H1 (cell line): ENCODE measurements at regions of chr6 and their contacts with region 1.

Region 1: GRCh38 chr6:52995913-52996645 is 995 bp upstream of the GSTA4 start:
- DNase-seq: peak; percentile 47 to 60
- H3K4me3 ChIP-seq: peak overlapping the region in 2 of 4 experiments; percentile 6 to 40; a peak in 3 of 8 replicates
- H3K27ac ChIP-seq: no peak overlapping the region
- H3K4me1 ChIP-seq: no peaks in the 10 kb centered on the region; a peak in 1 of 7 replicates
- H3K27me3 ChIP-seq: no peaks in the 10 kb centered on the region
- CTCF ChIP-seq: no peak
- EP300 ChIP-seq: no peak
- POLR2A ChIP-seq: no peak
- RAD21 ChIP-seq: no peak

Region 2: GRCh38 chr6:52834481-52834880 is 161.6 kb before region 1 on chr6:
- CTCF ChIA-PET with region 1: no interaction called
- POLR2A ChIA-PET with region 1: no interaction called
- DNase-seq: no peak
- H3K4me3 ChIP-seq: no peak overlapping the region
- H3K27ac ChIP-seq: no peak overlapping the region
- H3K4me1 ChIP-seq: no peaks in the 10 kb centered on the region
- H3K27me3 ChIP-seq: peaks cover 0 to 3% (median 1%) of the 10 kb centered on the region in 4 experiments; a peak in 1 of 7 replicates
- CTCF ChIP-seq: no peak
- EP300 ChIP-seq: no peak
- POLR2A ChIP-seq: no peak
- RAD21 ChIP-seq: no peak

Region 3: GRCh38 chr6:52904562-52905279 is 91.4 kb before region 1 on chr6:
- CTCF ChIA-PET with region 1: interaction called, 10 read pairs
- POLR2A ChIA-PET with region 1: no interaction called
- DNase-seq: peak in 1 of 2 experiments; percentile 62
- H3K4me3 ChIP-seq: no peak overlapping the region
- H3K27ac ChIP-seq: no peak overlapping the region
- H3K4me1 ChIP-seq: no peaks in the 10 kb centered on the region
- H3K27me3 ChIP-seq: no peaks in the 10 kb centered on the region
- CTCF ChIP-seq: peak; percentile 47 to 77 (median 65)
- EP300 ChIP-seq: no peak
- POLR2A ChIP-seq: no peak
- RAD21 ChIP-seq: peak; percentile 68 to 77

Region 4: GRCh38 chr6:52958546-52959255 is 37.4 kb before region 1 on chr6:
- CTCF ChIA-PET with region 1: interaction called, 11 read pairs
- POLR2A ChIA-PET with region 1: no interaction called
- DNase-seq: no peak
- H3K4me3 ChIP-seq: no peak overlapping the region
- H3K27ac ChIP-seq: no peak overlapping the region
- H3K4me1 ChIP-seq: peaks cover 0 to 8% (median 3%) of the 10 kb centered on the region in 4 experiments; a peak in 4 of 7 replicates
- H3K27me3 ChIP-seq: peaks cover 0 to 4% (median 1%) of the 10 kb centered on the region in 4 experiments; a peak in 2 of 7 replicates
- CTCF ChIP-seq: no peak
- EP300 ChIP-seq: no peak
- POLR2A ChIP-seq: no peak
- RAD21 ChIP-seq: no peak

Region 5: DNA sequence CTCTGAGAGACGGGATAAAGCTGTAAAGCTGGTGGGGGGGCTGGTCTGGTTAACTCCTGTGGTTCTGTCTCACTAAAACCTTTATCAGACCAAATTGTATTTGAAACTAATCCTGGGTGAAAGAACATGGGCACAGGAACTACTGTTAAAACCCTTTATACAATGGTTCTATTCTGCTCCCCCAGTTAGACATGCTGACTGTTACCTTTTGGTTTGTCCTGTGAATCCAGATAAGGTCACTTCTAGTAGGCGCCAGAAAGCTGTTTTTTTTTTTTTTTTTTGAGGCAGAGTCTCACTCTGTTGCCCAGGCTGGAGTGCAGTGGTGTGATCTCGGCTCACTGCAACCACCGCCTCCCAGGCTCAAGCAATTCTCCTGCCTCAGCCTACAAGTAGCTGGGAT is 30.7 kb before region 1 on chr6:
- CTCF ChIA-PET with region 1: interaction called, 21 read pairs
- POLR2A ChIA-PET with region 1: interaction called, 3 read pairs
- DNase-seq: no peak
- H3K4me3 ChIP-seq: no peak overlapping the region
- H3K27ac ChIP-seq: no peak overlapping the region
- H3K4me1 ChIP-seq: peaks cover 0 to 5% (median under 1%) of the 10 kb centered on the region in 4 experiments; a peak in 3 of 7 replicates
- H3K27me3 ChIP-seq: peaks cover 0 to 4% (median 1%) of the 10 kb centered on the region in 4 experiments; a peak in 2 of 7 replicates
- CTCF ChIP-seq: no peak
- EP300 ChIP-seq: no peak
- POLR2A ChIP-seq: no peak
- RAD21 ChIP-seq: no peak

Region 6: GRCh38 chr6:52984247-52984646 is 11.8 kb before region 1 on chr6:
- CTCF ChIA-PET with region 1: interaction called, 21 read pairs
- POLR2A ChIA-PET with region 1: interaction called, 10 read pairs
- DNase-seq: no peak
- H3K4me3 ChIP-seq: no peak overlapping the region
- H3K27ac ChIP-seq: no peak overlapping the region
- H3K4me1 ChIP-seq: no peaks in the 10 kb centered on the region
- H3K27me3 ChIP-seq: no peaks in the 10 kb centered on the region
- CTCF ChIP-seq: no peak
- EP300 ChIP-seq: no peak
- POLR2A ChIP-seq: no peak
- RAD21 ChIP-seq: no peak

Region 7: DNA sequence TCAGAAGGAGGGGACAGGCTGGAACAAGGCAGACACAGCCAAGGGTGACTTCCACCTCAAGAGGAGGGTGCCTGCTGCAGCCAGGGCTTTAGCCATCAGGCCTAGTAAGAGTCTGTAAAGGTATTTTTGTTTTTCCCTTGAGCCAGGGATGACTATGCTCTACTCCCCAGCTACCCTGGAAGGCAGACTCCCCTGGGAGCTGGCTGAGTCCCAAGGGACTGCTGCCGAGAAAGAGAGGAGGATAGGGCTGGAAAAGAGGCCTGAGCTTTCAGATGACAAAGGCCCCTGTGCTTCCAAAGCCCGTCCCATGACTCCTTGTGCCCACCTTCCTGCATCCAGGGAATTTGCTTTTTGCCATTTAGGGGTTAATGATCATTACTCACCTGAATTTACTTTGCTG is 13.0 kb after region 1 on chr6:
- CTCF ChIA-PET with region 1: interaction called, 20 read pairs
- POLR2A ChIA-PET with region 1: no interaction called
- DNase-seq: no peak
- H3K4me3 ChIP-seq: no peak overlapping the region
- H3K27ac ChIP-seq: no peak overlapping the region
- H3K4me1 ChIP-seq: no peaks in the 10 kb centered on the region
- H3K27me3 ChIP-seq: no peaks in the 10 kb centered on the region
- CTCF ChIP-seq: no peak
- EP300 ChIP-seq: no peak
- POLR2A ChIP-seq: no peak
- RAD21 ChIP-seq: no peak